Psoas muscle (tissue), 8 donors: ENCODE measurements at regions of chr2 and their contacts with region 1.

Region 1: GRCh38 chr2:71558300-71559051 is 105.1 kb downstream of the DYSF start:
- DNase-seq: peak in 1 of 2 donors; percentile 38
- ATAC-seq: peak in 3 of 4 donors; percentile 13 to 37 (median 20)
- H3K4me3 ChIP-seq: no peak overlapping the region
- H3K27ac ChIP-seq: no peak overlapping the region
- H3K4me1 ChIP-seq: no peaks in the 10 kb centered on the region
- H3K27me3 ChIP-seq: no peaks in the 10 kb centered on the region
- CTCF ChIP-seq: no peak

Region 2: DNA sequence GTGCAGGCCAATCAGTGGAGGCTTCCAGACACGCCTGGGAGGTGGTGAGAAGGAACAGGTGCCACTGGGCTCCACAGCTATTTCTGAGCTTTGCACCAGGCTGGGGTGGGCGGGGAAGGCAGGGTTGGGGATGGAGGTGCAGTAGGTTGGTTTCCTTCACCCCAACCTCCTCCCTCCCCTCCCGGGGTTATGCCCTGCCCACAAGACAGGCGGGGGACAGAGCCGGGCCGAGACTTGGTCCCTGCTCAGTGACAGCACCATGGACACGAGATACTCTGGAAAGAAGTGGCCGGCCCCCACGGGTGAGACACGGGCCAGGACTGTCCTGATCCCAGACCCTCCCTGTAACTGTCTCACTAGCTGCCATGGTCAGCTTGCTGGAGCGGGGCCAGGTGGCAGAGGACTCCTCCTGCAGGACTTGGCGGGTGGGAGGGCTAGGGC is 45.4 kb before region 1 on chr2:
- intact Hi-C with region 1: no loop called
- DNase-seq: no peak
- ATAC-seq: peak in 2 of 4 donors; percentile 8 to 9
- H3K4me3 ChIP-seq: no peak overlapping the region
- H3K27ac ChIP-seq: no peak overlapping the region
- H3K4me1 ChIP-seq: peaks cover 4% of the 10 kb centered on the region
- H3K27me3 ChIP-seq: no peaks in the 10 kb centered on the region
- CTCF ChIP-seq: no peak

Region 3: DNA sequence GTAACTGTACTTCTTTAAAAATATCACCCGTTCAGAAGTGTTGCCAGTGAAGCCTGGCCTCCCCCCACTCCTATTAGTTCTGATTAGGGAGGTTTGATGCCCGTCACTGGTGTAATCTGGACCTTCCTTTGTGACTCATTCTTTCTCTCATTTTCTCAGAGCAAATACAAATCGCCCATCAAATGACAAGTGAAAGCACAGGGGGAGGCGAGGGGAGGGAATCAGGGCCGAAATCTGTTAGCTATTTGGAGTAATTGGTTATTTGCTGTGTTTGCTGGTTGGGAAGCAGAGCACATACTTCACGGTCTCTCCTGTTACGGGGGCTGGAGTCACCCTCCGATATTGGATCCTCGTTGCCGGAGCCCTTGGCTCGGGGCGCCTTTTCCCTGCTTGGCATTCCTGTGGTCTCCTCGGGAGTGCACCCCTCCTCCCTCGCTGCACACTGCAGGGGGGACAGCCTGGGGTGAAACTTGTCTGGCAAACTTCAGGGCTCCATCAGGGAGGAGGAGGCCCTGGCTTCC is 73.0 kb after region 1 on chr2:
- intact Hi-C with region 1: no loop called
- DNase-seq: no peak
- ATAC-seq: peak; percentile 63 to 73 (median 65)
- H3K4me3 ChIP-seq: no peak overlapping the region
- H3K27ac ChIP-seq: no peak overlapping the region
- H3K4me1 ChIP-seq: peaks cover 22% of the 10 kb centered on the region
- H3K27me3 ChIP-seq: no peaks in the 10 kb centered on the region
- CTCF ChIP-seq: no peak

Region 4: DNA sequence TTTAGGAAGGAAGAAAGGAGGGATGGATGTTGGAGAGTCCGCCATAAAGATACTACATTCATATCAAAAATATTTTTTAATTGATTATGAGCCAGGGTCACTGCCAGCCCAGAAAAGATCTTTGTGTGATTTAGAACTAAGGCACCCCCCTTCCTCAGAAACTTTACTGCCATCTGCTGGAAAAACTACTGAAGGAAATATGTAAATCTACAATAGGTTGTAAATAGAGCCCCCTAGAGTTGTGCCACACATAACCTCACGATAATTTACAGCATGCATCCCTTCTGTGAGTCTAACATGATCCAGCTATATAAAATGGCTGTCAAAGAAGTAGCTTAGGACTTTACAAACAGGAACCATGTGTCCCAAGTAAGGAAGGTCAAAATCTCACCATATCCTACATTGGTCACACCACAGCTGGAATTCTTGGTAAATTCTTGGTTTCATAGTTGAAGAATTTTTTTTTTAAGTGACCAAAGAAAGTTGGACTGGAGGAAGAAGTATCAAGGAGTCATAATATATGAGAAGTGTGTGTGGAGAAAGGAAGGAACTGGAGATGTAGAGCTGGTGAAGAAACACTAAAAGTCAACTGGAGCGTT is 436.7 kb after region 1 on chr2:
- intact Hi-C with region 1: loop called in 1 of 2 experiments (anchors 10 kb)
- DNase-seq: no peak
- ATAC-seq: peak in 3 of 4 donors; percentile 56 to 80 (median 80)
- H3K4me3 ChIP-seq: no peak overlapping the region
- H3K27ac ChIP-seq: no peak overlapping the region
- H3K4me1 ChIP-seq: no peaks in the 10 kb centered on the region
- H3K27me3 ChIP-seq: no peaks in the 10 kb centered on the region
- CTCF ChIP-seq: peak; percentile 48